Ascending aorta (tissue), 2 donors: ENCODE measurements at regions of chr7 and their contacts with region 1.

Region 1: GRCh38 chr7:43139137-43139536 is 26.7 kb downstream of the HECW1 start:
- DNase-seq: no peak
- H3K4me3 ChIP-seq: no peak overlapping the region
- H3K27ac ChIP-seq: no peak overlapping the region
- H3K4me1 ChIP-seq: no peaks in the 10 kb centered on the region
- H3K27me3 ChIP-seq: no peaks in the 10 kb centered on the region
- CTCF ChIP-seq: no peak

Region 2: GRCh38 chr7:43071604-43072003 is 67.5 kb before region 1 on chr7:
- intact Hi-C with region 1: loop called (anchors 10 kb)
- DNase-seq: no peak
- H3K4me3 ChIP-seq: no peak overlapping the region
- H3K27ac ChIP-seq: no peak overlapping the region
- H3K4me1 ChIP-seq: no peaks in the 10 kb centered on the region
- H3K27me3 ChIP-seq: no peaks in the 10 kb centered on the region
- CTCF ChIP-seq: peak in 1 of 3 experiments; percentile 5

Region 3: DNA sequence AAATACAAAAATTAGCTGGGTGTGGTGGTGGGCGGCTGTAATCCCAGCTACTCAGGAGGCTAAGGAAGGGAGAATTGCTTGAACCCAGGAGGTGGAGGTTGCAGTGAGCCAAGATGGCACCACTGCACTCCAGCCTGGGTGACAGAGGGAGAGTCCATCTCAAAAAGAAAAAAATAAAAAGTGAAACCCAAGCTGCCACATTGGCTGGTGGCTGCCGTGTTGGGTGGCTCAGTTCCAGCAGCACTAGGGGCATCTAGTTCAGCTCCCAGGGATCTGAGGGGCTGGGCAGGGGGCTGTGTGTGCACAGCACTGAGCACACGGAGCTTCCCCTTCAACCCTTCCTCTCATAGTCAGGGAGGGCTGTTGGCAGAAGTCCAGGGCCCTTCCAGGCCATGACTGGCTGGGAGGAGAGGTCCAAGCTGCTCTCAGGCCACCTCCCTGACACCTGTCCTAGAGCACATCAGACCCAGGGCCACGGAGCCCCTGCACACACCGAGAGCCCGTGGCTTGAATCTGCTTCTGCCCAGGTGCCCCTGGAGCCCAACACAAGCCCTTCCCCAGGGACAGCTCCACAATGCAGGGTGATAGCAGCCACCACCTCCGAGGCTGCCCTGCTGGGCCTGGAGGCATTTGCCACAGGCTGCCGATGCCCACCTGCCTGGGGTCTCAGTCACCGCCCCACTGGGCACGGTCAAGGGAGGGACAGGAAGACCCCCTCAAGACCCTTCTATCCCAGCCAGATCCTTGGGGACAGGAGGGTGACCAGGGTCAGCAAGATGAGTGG is 1108.9 kb after region 1 on chr7:
- intact Hi-C with region 1: no loop called
- DNase-seq: no peak
- H3K4me3 ChIP-seq: no peak overlapping the region
- H3K27ac ChIP-seq: no peak overlapping the region
- H3K4me1 ChIP-seq: no peaks in the 10 kb centered on the region
- H3K27me3 ChIP-seq: no peaks in the 10 kb centered on the region
- CTCF ChIP-seq: no peak